Dorsolateral prefrontal cortex (tissue), 120 donors: ENCODE measurements at regions of chr16 and their contacts with region 1.

Region 1: GRCh38 chr16:9159839-9160550 is 68.6 kb downstream of the HAPSTR1 start:
- DNase-seq: peak; percentile 73 to 85 (median 79)
- H3K4me3 ChIP-seq: peak overlapping the region in 43 of 59 donors; percentile 9 to 56 (median 39)
- H3K27ac ChIP-seq: peak overlapping the region in 10 of 59 donors; percentile 3 to 66 (median 42)
- H3K27me3 ChIP-seq: no peaks in the 10 kb centered on the region
- CTCF ChIP-seq: peak; percentile 44 to 97 (median 81)

Region 2: GRCh38 chr16:9192746-9193145 is 32.8 kb after region 1 on chr16:
- intact Hi-C with region 1: no loop called
- DNase-seq: no peak
- H3K4me3 ChIP-seq: no peak overlapping the region
- H3K27ac ChIP-seq: no peak overlapping the region
- H3K27me3 ChIP-seq: no peaks in the 10 kb centered on the region
- CTCF ChIP-seq: no peak

Region 3: GRCh38 chr16:9225611-9226316 is 65.8 kb after region 1 on chr16:
- intact Hi-C with region 1: loop called (anchors 1 to 5 kb)
- DNase-seq: peak in 4 of 10 donors; percentile 21 to 54 (median 46)
- H3K4me3 ChIP-seq: no peak overlapping the region
- H3K27ac ChIP-seq: peak overlapping the region in 2 of 59 donors; percentile 2 to 14
- H3K27me3 ChIP-seq: no peaks in the 10 kb centered on the region
- CTCF ChIP-seq: peak in 55 of 56 donors; percentile 15 to 79 (median 60)

Region 4: DNA sequence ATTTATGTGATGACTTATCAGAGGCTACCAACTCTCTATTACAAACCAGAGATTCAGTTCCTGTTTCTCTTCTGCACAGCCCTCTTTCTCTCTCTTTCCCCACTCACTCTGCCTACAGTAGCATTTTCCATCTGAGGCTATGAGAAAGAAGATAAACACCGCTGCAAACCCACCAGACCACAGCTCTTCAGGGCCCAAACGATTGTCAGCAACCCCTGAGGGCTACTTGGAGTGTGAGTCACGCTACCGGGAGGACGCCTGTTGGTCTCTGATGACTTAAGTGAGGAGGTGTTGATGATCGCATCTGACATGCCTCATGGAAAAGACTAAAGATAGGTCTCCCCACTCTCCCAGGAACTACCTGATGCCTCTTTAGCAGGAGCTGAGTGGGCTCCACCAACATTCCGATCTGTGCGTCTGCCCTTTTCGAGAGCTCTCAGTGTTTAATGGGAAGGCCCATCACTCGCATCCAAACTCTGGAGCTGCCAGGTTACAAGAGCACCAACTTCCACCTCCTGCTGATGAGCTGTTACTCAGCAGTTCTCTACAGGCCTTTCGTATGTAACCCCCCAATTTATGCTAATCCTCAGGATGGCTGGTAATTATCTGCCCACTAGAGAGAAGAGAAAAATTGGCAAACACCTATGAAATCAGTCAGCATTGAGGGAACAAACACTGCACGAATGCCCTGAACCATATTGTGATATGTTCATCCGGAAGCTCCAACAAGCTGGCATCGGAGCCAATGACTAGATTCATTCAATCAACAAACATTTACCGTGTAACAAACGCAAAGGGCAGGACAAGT is 1013.1 kb after region 1 on chr16:
- intact Hi-C with region 1: loop called in 1 of 2 experiments (anchors 10 kb)
- DNase-seq: peak in 6 of 10 donors; percentile 18 to 69 (median 41)
- H3K4me3 ChIP-seq: peak overlapping the region in 7 of 59 donors; percentile 5 to 20 (median 17)
- H3K27ac ChIP-seq: peak overlapping the region in 31 of 59 donors; percentile 7 to 66 (median 31)
- H3K27me3 ChIP-seq: no peaks in the 10 kb centered on the region
- CTCF ChIP-seq: no peak